ENCODE measurements at regions of chr11 and their contacts with region 1.

Region 1: DNA sequence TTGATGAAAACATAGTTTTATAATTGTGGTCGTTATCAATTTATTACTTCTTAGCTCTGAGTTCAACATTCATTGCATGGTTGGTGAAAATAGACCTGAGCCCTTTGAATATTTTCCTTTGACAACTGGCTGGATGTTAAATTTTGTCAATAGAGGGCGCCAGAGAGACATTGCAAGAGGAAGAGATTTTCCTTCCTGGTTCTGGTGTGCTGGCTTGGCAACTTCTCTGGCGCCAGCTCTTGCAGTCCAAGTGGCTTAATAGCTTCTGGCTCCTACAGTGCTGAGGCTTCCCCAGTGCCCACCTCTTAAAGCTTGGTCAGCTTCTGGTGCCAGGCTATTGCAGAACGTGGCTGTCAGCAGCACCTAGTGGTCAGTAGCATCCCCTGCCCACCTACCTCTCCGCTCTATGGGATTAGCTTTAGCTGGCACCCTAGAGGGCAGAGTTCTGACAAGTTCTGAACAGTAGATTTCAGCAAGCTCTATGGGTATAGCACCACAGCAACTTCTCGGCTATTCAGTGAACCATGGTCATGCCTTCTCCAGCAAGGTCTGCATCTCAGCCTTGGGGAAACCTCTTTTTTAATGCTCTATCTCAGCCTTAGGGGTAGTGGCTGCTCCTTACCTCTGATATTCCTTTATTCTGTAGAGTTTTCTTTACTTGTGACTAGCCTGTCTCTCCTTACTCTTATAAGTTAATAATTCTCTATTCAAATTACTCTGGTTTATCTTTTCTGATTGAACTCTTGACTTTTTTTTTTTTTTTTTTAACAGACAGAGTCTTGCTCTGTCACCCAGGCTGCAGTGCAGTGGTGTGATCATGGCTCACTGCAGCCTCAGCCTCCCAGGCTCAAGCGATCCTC is 59.4 kb downstream of the ACER3 start:
- DNase-seq: peak; percentile 66
- H3K4me3 ChIP-seq: peak overlapping the region; percentile 12 to 41; a peak in 3 of 4 replicates
- H3K27ac ChIP-seq: no peak overlapping the region
- H3K4me1 ChIP-seq: peaks cover 3 to 9% of the 10 kb centered on the region in 2 experiments; a peak in 2 of 4 replicates
- H3K27me3 ChIP-seq: no peaks in the 10 kb centered on the region
- CTCF ChIP-seq: peak; percentile 97
- EP300 ChIP-seq: no peak
- RAD21 ChIP-seq: peak; percentile 79

Region 2: DNA sequence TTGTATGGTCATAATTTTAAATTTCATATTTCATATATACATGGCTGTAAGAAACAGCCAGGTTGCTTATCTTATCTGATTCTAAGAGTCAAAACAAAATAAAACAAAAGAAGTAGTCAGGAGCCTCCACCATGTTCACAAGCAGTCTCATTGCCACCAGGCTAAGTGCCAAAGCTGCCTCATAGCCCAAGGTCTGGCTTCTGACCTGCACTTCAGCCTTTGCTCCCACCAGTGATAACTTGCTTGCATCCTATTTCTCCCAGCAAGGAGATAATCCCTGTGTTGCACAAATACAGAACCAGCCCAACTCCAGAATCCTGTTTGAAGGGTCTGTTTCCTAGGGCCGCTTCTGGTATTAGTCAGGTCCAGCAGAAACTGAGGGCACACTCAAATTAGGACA is 190.9 kb before region 1 on chr11:
- CTCF ChIA-PET with region 1: interaction called, 108 read pairs
- POLR2A ChIA-PET with region 1: no interaction called
- DNase-seq: no peak
- H3K4me3 ChIP-seq: no peak overlapping the region
- H3K27ac ChIP-seq: no peak overlapping the region
- H3K4me1 ChIP-seq: no peaks in the 10 kb centered on the region; a peak in 1 of 4 replicates
- H3K27me3 ChIP-seq: peaks cover 18% of the 10 kb centered on the region; the same call in 1 of the 2 replicates
- CTCF ChIP-seq: no peak
- EP300 ChIP-seq: no peak
- RAD21 ChIP-seq: no peak

Region 3: DNA sequence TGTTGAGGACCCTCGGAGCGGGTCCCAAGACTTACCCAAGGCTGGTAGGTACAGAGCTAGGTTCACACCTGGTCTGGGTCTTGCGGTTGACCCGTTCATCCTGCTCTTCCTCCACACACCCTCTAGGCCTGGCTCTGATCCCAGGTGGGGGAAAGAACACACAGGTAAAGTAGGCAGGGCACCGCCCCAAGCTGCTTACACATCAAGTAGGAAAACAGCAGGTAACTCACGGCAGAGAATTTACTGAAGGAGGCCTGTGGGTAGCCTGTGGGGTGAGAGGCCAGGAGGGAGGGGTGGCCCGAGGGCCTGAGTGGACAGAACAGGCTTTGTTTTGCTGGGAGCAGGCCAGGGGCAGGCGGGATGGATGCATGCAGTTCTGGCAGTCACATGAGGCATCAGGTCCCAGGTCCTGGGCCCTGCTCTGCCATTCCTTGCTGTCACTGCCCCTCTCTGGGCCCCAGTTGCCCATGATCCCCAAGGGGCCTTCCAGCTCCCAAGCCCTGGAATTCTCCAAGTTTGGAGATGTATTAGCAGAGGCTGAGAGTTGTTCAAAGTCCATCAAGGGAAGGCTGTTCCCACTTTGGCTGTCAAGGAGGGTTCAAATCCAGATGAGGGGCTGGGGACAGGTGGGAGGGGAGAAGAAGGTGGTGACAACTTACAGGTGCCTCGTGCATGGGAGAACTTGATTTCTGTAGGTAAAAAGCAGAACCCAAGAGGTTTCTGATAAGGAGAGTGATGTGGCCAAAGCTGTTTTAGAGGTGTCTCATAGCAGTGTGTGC is 131.3 kb before region 1 on chr11:
- CTCF ChIA-PET with region 1: interaction called, 15 read pairs
- POLR2A ChIA-PET with region 1: no interaction called
- DNase-seq: no peak
- H3K4me3 ChIP-seq: no peak overlapping the region
- H3K27ac ChIP-seq: peak overlapping the region in 1 of 2 experiments; percentile 43; a peak in 1 of 4 replicates
- H3K4me1 ChIP-seq: peaks cover 14 to 67% of the 10 kb centered on the region in 2 experiments; a peak in 3 of 4 replicates
- H3K27me3 ChIP-seq: no peaks in the 10 kb centered on the region
- CTCF ChIP-seq: no peak
- EP300 ChIP-seq: no peak
- RAD21 ChIP-seq: no peak

Region 4: DNA sequence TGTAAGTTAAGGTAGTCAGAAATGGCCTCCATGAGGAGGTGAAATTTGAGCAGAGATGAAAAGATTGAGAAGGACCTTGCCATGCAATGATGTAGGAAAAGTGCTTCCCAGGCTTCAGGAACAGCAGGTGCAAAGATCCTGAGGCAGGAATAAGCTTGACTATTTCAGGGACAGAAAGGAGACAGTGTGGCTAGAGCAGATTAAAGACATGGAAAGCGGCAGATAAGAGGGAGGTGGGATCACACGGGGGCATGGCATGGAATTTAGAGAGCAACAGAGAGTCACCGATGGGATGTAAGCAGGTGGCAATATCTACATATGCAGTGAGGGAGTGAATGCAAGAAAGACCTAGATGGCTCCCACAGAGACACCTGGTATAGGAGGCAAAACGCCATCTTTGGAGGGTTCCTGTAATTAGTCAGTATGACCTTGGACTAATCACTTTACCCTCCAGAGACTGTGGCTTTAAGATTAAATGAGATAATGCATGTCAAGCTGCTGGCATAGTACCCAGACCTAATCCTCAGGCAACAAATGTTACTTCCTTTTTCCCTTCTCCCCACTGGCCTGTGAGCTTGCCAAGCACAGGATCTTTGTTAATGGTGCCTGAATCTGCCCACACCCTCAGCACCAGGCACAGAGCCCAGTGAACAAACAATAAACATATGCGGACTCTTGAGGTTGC is 84.0 kb before region 1 on chr11:
- CTCF ChIA-PET with region 1: interaction called, 11 read pairs
- POLR2A ChIA-PET with region 1: no interaction called
- DNase-seq: no peak
- H3K4me3 ChIP-seq: no peak overlapping the region
- H3K27ac ChIP-seq: no peak overlapping the region
- H3K4me1 ChIP-seq: peaks cover under 1 to 15% of the 10 kb centered on the region in 2 experiments; a peak in 2 of 4 replicates
- H3K27me3 ChIP-seq: peaks cover 38% of the 10 kb centered on the region; the same call in 1 of the 2 replicates
- CTCF ChIP-seq: no peak
- EP300 ChIP-seq: no peak
- RAD21 ChIP-seq: no peak

Region 5: DNA sequence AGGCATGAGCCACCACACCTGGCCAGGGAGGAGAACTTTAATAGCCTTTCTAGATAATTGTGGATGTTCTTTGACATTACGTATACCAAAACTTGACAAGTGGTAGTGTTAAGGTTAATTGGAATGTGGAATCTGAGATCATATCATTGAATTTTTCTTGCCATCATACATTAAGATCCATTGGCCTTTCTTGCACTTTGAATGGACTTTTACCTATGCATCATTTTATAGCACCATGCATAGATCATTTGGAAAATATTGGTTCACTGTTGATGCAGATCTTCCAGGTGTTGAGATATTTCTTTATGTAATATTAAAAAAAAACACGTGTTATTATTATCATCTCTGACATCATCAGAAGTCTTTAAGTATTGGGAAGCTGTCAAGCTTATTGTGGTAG is 22.9 kb before region 1 on chr11:
- CTCF ChIA-PET with region 1: interaction called, 67 read pairs
- POLR2A ChIA-PET with region 1: no interaction called
- DNase-seq: no peak
- H3K4me3 ChIP-seq: no peak overlapping the region
- H3K27ac ChIP-seq: no peak overlapping the region
- H3K4me1 ChIP-seq: no peaks in the 10 kb centered on the region
- H3K27me3 ChIP-seq: no peaks in the 10 kb centered on the region
- CTCF ChIP-seq: no peak
- EP300 ChIP-seq: no peak
- RAD21 ChIP-seq: no peak

Region 6: DNA sequence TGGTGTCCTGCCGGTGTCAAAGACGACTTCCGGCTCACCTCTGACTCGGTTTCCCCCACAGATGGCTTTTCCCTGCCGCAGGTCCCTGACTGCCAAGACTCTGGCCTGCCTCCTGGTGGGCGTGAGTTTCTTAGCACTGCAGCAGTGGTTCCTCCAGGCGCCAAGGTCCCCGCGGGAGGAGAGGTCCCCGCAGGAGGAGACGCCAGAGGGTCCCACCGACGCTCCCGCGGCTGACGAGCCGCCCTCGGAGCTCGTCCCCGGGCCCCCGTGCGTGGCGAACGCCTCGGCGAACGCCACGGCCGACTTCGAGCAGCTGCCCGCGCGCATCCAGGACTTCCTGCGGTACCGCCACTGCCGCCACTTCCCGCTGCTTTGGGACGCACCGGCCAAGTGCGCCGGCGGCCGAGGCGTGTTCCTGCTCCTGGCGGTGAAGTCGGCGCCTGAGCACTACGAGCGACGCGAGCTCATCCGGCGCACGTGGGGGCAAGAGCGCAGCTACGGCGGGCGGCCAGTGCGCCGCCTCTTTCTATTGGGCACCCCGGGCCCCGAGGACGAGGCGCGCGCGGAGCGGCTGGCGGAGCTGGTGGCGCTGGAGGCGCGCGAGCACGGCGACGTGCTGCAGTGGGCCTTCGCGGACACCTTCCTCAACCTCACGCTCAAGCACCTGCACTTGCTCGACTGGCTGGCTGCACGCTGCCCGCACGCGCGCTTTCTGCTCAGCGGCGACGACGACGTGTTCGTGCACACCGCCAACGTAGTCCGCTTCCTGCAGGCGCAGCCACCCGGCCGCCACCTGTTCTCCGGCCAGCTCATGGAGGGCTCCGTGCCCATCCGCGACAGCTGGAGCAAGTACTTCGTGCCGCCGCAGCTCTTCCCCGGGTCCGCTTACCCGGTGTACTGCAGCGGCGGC is 119.6 kb after region 1 on chr11:
- CTCF ChIA-PET with region 1: interaction called, 77 read pairs
- POLR2A ChIA-PET with region 1: no interaction called
- DNase-seq: peak; percentile 81
- H3K4me3 ChIP-seq: peak overlapping the region; percentile 42 to 59
- H3K27ac ChIP-seq: no peak overlapping the region
- H3K4me1 ChIP-seq: peaks cover 0 to 3% of the 10 kb centered on the region in 2 experiments; a peak in 1 of 4 replicates
- H3K27me3 ChIP-seq: no peaks in the 10 kb centered on the region
- CTCF ChIP-seq: peak; percentile 65
- EP300 ChIP-seq: no peak
- RAD21 ChIP-seq: peak; percentile 52